A549 (cell line): ENCODE measurements at regions of chr2 and their contacts with region 1.

Region 1: GRCh38 chr2:202178342-202178958 is 59.9 kb downstream of the SUMO1 start:
- DNase-seq: peak; percentile 51 to 67
- ATAC-seq: peak; percentile 92 to 99
- H3K4me3 ChIP-seq: no peak overlapping the region
- H3K27ac ChIP-seq: no peak overlapping the region
- H3K4me1 ChIP-seq: no peaks in the 10 kb centered on the region
- CTCF ChIP-seq: peak; percentile 94
- EP300 ChIP-seq: no peak
- POLR2A ChIP-seq: no peak
- RAD21 ChIP-seq: peak; percentile 93 to 96

Region 2: DNA sequence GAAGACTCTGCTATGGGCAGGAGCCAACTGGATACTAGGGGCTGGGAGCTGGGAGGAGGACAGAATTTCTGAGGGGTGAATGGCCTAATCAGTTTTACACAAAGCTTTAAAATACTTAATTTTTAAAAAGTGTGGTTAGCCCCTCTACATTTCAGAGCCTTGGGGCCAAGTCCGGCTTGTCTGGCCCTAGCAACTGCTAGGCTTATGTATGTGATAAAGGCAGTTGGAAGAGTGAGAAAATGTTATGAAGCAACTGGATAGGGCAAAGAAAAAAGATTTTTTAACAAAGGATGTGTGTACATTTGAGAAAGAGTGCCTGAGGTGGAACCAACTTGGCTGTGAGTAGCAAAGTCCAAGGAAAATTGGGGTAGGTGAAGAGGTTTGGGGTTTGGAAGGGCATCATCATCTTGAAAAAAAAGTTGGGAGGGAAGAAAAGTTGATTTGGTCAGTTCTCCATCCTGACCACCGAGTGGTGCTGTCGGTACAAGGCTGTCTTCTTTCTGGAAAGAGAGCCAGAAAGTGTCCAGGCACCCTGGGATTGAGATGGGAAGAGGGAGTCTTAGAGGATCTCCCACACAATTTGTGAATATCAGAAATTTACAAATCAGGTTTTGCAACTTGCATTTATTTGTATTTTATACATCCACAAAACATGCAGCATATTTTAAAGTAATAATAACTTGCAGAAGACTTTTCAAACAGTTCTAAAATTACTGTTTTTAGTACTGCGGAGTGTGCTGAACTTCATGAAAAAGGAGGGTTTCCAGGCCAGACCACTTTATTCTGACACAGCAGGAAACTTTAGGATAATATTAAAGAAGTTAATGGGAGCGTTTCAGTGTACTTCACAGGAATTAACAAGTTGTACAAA is 382.6 kb before region 1 on chr2:
- CTCF ChIA-PET with region 1: interaction called, 16 read pairs
- POLR2A ChIA-PET with region 1: no interaction called
- DNase-seq: peak; percentile 61 to 67
- ATAC-seq: peak; percentile 79 to 84; a peak in 5 of 6 replicates
- H3K4me3 ChIP-seq: no peak overlapping the region
- H3K27ac ChIP-seq: no peak overlapping the region
- H3K4me1 ChIP-seq: peaks cover 14% of the 10 kb centered on the region; the same call in 2 of the 3 replicates
- CTCF ChIP-seq: peak; percentile 64
- EP300 ChIP-seq: no peak
- POLR2A ChIP-seq: no peak
- RAD21 ChIP-seq: peak; percentile 67 to 74

Region 3: DNA sequence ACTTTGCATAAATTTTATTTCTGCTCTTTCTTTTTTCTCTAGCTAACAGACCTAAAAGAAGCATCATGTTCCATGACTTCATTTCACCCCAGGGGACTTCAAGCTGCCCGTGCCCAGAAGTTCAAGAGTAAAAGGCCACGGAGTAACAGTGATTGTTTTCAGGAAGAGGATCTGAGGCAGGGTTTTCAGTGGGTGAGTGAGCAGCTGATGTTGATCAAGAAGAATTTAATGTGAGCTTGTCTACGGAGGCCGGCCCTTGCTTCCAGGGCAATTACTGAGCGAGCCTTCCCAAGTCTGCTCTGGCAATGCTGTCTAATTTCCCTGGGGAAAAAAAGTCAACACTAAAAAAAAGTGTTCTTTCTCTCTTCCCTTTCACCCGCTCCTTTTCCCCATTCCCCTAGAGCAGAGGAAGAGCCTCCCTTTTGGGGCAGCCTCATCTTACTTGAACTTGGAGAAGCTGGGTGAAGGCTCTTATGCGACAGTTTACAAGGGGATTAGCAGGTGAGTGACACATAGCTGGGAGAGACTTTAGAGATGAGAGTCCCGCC is 370.9 kb before region 1 on chr2:
- CTCF ChIA-PET with region 1: interaction called, 14 read pairs
- POLR2A ChIA-PET with region 1: no interaction called
- DNase-seq: no peak
- ATAC-seq: no peak
- H3K4me3 ChIP-seq: no peak overlapping the region
- H3K27ac ChIP-seq: no peak overlapping the region
- H3K4me1 ChIP-seq: no peaks in the 10 kb centered on the region
- CTCF ChIP-seq: no peak
- EP300 ChIP-seq: no peak
- POLR2A ChIP-seq: no peak
- RAD21 ChIP-seq: no peak

Region 4: GRCh38 chr2:201866643-201867473 is 311.6 kb before region 1 on chr2:
- CTCF ChIA-PET with region 1: interaction called, 75 read pairs
- POLR2A ChIA-PET with region 1: no interaction called
- DNase-seq: no peak
- ATAC-seq: no peak
- H3K4me3 ChIP-seq: no peak overlapping the region
- H3K27ac ChIP-seq: no peak overlapping the region
- H3K4me1 ChIP-seq: no peaks in the 10 kb centered on the region
- CTCF ChIP-seq: no peak
- EP300 ChIP-seq: no peak
- POLR2A ChIP-seq: no peak
- RAD21 ChIP-seq: no peak

Region 5: GRCh38 chr2:202158796-202159195 is 19.7 kb before region 1 on chr2:
- CTCF ChIA-PET with region 1: interaction called, 15 read pairs
- POLR2A ChIA-PET with region 1: no interaction called
- DNase-seq: peak in 1 of 2 experiments; percentile 39
- ATAC-seq: peak; percentile 86 to 88
- H3K4me3 ChIP-seq: no peak overlapping the region
- H3K27ac ChIP-seq: no peak overlapping the region
- H3K4me1 ChIP-seq: no peaks in the 10 kb centered on the region
- CTCF ChIP-seq: peak; percentile 49
- EP300 ChIP-seq: no peak
- POLR2A ChIP-seq: no peak
- RAD21 ChIP-seq: peak; percentile 67 to 72

Region 6: GRCh38 chr2:202193881-202194353 is 15.5 kb after region 1 on chr2:
- CTCF ChIA-PET with region 1: interaction called, 12 read pairs
- POLR2A ChIA-PET with region 1: no interaction called
- DNase-seq: no peak
- ATAC-seq: no peak
- H3K4me3 ChIP-seq: no peak overlapping the region
- H3K27ac ChIP-seq: no peak overlapping the region
- H3K4me1 ChIP-seq: no peaks in the 10 kb centered on the region
- CTCF ChIP-seq: no peak
- EP300 ChIP-seq: no peak
- POLR2A ChIP-seq: no peak
- RAD21 ChIP-seq: no peak